Natural killer cell (primary cell): ENCODE measurements at regions of chr9 and their contacts with region 1.

Region 1: DNA sequence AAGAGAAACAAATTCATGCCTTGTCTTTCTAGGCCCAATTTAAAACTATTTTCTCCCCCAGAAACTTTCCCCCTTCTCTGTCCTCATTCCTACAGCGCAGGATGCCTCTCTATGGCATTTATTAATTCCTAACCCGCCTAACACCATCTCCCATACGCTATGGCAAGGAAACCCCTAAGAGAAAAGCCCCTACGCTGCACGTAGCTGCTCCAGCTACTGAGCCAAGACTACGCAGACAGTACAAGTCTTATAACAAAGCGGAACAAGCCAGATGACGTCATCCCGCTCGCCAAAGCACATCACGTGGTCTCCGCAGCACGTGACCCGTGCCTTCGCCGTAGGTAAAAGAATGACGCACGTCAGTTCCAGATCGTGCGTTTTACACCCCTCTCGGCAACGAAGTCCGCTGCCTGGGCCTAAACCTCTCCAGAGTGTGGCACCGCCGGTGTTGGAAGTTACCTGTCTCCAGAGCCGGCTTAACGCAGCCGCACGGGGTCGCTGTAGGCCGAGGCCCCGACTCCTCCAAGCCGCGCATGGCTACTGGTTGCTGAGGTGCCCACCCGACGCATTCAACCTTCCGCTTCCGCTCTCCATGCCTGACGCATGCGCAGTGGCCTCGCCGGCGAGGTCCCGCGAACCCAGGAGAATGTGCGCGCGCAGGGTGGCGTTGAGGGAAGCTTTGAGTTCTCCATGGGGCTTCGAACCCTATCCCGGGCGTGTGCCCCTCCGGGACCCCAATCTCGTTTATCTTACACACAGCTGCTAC is at the start of gene TRMO:
- DNase-seq: peak; percentile 98 to 100
- ATAC-seq: peak; percentile 75 to 93 (median 81)
- H3K4me3 ChIP-seq: peak within 1 kb of the TSS; percentile 78
- H3K4me3 Mint-ChIP-seq: peak within 1 kb of the TSS; percentile 92
- H3K27ac ChIP-seq: peak within 1 kb of the TSS; percentile 99
- H3K27ac Mint-ChIP-seq: peak within 1 kb of the TSS; percentile 98
- H3K4me1 ChIP-seq: peaks cover 13% of the 10 kb centered on the region
- H3K4me1 Mint-ChIP-seq: peaks cover 45 to 46% of the 10 kb centered on the region in 2 donors
- H3K27me3 ChIP-seq: no peaks in the 10 kb centered on the region
- H3K27me3 Mint-ChIP-seq: no peaks in the 10 kb centered on the region
- CTCF ChIP-seq: peak; percentile 56
- total RNA-seq, gene TRMO: 26.6 to 35.1 (median 31.2) TPM

Region 2: DNA sequence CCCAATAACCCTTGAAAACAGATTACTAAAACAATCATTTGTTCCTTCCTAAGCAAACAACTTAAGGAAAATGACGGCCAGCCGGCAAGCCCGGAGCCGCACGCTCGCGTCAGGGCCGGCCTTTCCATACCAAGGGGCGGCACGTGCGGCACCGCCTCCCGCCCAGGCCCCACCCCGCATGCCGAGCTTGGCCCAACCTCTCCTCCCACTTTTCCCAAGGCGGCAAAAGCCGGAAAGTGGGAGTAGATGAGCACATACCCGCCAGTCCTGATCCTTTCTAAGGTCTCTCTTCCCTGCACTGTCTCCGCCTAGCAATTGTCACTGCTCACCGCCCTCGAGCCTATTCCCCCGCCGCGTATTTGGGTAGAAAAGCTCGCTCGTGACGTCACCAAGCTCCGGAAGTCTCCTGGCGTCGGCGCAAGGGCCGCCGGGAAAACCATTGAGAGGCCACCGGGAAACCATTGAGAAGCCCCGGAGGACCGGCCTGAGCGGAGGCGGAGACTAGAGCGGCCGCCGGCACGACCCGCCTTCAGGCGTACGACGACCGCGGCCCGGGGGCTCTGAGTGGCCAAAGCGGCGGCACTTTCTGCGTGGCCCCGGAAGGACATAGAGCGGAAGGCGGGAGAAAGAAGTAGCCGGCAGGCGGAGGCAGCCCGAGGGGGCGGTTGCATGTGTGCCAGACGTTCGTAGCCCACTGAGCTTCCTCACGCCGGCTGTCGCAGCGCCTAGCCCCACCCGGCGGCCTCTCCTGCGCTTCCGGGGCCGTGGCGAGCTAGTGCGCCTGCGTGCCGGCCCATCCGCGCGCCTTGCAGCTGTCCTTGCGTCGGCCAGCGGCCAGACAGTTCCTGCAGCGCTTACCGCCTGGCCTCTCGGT is 288.9 kb before region 1 on chr9 and contains the starts of genes NCBP1 and TSTD2:
- intact Hi-C with region 1: loop called (anchors 2 kb)
- DNase-seq: peak; percentile 93 to 98
- ATAC-seq: peak; percentile 84 to 96 (median 89)
- H3K4me3 ChIP-seq: peak within 1 kb of the TSS; percentile 91
- H3K4me3 Mint-ChIP-seq: peak within 1 kb of the TSS; percentile 94
- H3K27ac ChIP-seq: peak within 1 kb of the TSS; percentile 93
- H3K27ac Mint-ChIP-seq: peak within 1 kb of the TSS; percentile 96 to 100
- H3K4me1 ChIP-seq: peaks cover 30% of the 10 kb centered on the region
- H3K4me1 Mint-ChIP-seq: peaks cover 45 to 65% of the 10 kb centered on the region in 2 donors
- H3K27me3 ChIP-seq: no peaks in the 10 kb centered on the region
- H3K27me3 Mint-ChIP-seq: no peaks in the 10 kb centered on the region
- CTCF ChIP-seq: no peak
- total RNA-seq, gene NCBP1: 39.3 to 55.2 (median 51.2) TPM
- total RNA-seq, gene TSTD2: 16.2 to 25.7 (median 24.7) TPM

Region 3: DNA sequence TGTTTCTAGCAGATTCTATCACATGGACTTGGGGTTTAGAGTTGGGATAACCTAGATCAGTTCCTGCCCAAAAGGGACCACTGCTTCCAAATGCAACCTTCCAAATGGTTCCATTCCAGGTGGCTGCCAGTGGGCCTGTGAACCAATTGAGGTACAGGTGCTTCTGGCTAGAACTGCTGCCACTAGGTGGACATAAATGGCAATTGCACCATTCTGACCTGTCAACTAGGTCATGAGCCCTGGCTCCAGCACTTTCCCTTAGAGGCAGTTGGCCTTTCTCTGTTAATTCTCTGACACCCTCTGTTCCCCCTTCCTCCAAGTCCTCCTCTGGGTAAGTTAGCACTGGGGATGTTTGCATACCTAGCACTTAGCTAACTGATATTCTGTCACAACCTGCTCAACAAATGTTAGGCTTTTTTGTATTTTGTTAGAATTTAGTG is 32.4 kb after region 1 on chr9:
- intact Hi-C with region 1: loop called (anchors 1 kb)
- DNase-seq: peak in 1 of 2 donors; percentile 83
- ATAC-seq: peak; percentile 65 to 91 (median 89)
- H3K4me3 ChIP-seq: no peak overlapping the region
- H3K4me3 Mint-ChIP-seq: no peak overlapping the region
- H3K27ac ChIP-seq: no peak overlapping the region
- H3K27ac Mint-ChIP-seq: no peak overlapping the region
- H3K4me1 ChIP-seq: no peaks in the 10 kb centered on the region
- H3K4me1 Mint-ChIP-seq: no peaks in the 10 kb centered on the region
- H3K27me3 ChIP-seq: no peaks in the 10 kb centered on the region
- H3K27me3 Mint-ChIP-seq: peaks cover 9% of the 10 kb centered on the region in 2 donors
- CTCF ChIP-seq: peak; percentile 47

Region 4: DNA sequence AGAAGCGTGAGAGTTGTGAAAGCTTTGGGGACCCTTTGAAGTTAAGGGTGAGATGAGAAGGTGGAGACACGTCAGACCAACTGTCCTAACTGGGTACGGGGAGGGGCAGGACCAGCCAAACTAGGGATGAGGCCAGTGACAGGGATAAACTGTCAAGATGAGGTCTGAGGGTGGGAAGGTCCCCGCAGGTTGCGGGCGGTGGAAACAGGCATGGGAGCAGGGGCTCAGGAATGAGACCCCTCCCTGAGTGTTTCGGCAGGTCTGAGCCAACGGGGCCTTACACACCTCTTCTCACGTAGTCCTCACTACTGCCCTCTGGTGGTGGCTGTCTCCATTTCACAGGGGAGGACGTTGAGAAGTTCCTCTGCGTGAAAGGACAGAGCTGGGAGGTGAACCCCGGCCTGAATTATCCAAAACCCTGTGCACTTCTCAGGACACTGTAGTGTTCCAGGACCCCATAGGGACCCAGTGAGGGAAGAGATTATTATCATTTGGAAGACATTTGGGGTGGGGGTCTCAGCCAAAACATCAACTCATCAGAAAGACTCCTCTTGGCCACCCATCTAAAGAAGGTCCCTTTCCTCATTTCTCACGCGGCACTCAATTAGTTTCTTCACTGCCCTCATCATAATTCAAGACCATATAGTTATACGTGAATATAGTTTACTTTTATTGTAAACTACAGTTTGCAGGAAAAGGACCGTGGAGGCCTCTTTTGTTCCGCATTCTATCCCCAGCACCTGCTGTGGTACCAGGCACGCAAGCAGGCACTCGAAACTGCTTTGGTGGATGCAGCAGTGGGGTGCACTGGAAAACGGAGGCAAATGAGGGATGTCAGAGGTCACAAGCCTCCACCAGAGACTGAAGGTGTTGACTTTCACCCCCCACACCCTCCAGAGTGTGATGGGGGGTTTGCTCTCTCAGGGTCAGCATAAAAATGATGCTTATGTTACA is 112.7 kb after region 1 on chr9:
- intact Hi-C with region 1: loop called (anchors 1 kb)
- DNase-seq: peak; percentile 82 to 97
- ATAC-seq: peak; percentile 96 to 100 (median 100)
- H3K4me3 ChIP-seq: no peak overlapping the region
- H3K4me3 Mint-ChIP-seq: no peak overlapping the region
- H3K27ac ChIP-seq: no peak overlapping the region
- H3K27ac Mint-ChIP-seq: peak overlapping the region in 1 of 2 donors; percentile 42
- H3K4me1 ChIP-seq: peaks cover 4% of the 10 kb centered on the region
- H3K4me1 Mint-ChIP-seq: peaks cover 7 to 9% of the 10 kb centered on the region in 2 donors
- H3K27me3 ChIP-seq: no peaks in the 10 kb centered on the region
- H3K27me3 Mint-ChIP-seq: peaks cover 0 to 5% of the 10 kb centered on the region in 2 donors
- CTCF ChIP-seq: peak; percentile 78

Region 5: GRCh38 chr9:98108531-98109031 is 186.4 kb after region 1 on chr9:
- intact Hi-C with region 1: loop called (anchors 5 kb)
- DNase-seq: peak; percentile 27 to 83
- ATAC-seq: peak; percentile 86 to 93 (median 93)
- H3K4me3 ChIP-seq: no peak overlapping the region
- H3K4me3 Mint-ChIP-seq: peak overlapping the region; percentile 63
- H3K27ac ChIP-seq: peak overlapping the region; percentile 82
- H3K27ac Mint-ChIP-seq: peak overlapping the region; percentile 89 to 92
- H3K4me1 ChIP-seq: peaks cover 54% of the 10 kb centered on the region
- H3K4me1 Mint-ChIP-seq: peaks cover 54 to 65% of the 10 kb centered on the region in 2 donors
- H3K27me3 ChIP-seq: no peaks in the 10 kb centered on the region
- H3K27me3 Mint-ChIP-seq: no peaks in the 10 kb centered on the region
- CTCF ChIP-seq: no peak

Region 6: GRCh38 chr9:98263482-98264357 is 341.6 kb after region 1 on chr9:
- intact Hi-C with region 1: loop called (anchors 2 kb)
- DNase-seq: peak; percentile 67 to 90
- ATAC-seq: peak; percentile 93 to 100 (median 100)
- H3K4me3 ChIP-seq: no peak overlapping the region
- H3K4me3 Mint-ChIP-seq: no peak overlapping the region
- H3K27ac ChIP-seq: no peak overlapping the region
- H3K27ac Mint-ChIP-seq: no peak overlapping the region
- H3K4me1 ChIP-seq: no peaks in the 10 kb centered on the region
- H3K4me1 Mint-ChIP-seq: no peaks in the 10 kb centered on the region
- H3K27me3 ChIP-seq: no peaks in the 10 kb centered on the region
- H3K27me3 Mint-ChIP-seq: peaks cover under 1 to 12% of the 10 kb centered on the region in 2 donors
- CTCF ChIP-seq: peak; percentile 94